Activated CD4-positive, alpha-beta T cell treated with anti-CD3 and anti-CD28 coated beads for 36 hours (primary cell): ENCODE measurements at regions of chr22 and their contacts with region 1.

Region 1: DNA sequence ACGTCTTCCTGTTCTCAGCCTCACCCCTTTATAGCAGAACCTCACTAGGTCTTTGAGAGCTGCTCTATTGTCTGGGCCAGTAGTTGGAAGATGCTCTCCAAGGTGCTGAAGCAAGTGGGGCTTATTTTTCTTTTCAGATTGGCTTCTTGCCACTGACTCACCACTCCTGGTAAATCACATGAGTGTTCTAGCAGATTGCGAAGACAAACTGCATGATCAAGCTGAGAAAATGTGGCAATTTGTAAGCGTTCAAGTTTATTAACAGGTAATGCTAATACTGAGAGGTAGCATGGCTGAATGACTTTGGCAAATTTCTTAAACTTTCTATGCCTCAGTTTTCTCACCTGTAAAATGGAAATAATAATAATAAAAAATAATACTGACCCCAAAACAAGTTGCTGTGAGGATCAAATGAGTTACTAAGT is 59.2 kb downstream of the CACNG2 start:
- DNase-seq: peak; percentile 47
- ATAC-seq: no peak
- H3K4me3 Mint-ChIP-seq: no peak overlapping the region
- H3K27ac Mint-ChIP-seq: no peak overlapping the region
- H3K4me1 Mint-ChIP-seq: peaks cover 3% of the 10 kb centered on the region
- H3K27me3 Mint-ChIP-seq: peaks cover 43% of the 10 kb centered on the region

Region 2: DNA sequence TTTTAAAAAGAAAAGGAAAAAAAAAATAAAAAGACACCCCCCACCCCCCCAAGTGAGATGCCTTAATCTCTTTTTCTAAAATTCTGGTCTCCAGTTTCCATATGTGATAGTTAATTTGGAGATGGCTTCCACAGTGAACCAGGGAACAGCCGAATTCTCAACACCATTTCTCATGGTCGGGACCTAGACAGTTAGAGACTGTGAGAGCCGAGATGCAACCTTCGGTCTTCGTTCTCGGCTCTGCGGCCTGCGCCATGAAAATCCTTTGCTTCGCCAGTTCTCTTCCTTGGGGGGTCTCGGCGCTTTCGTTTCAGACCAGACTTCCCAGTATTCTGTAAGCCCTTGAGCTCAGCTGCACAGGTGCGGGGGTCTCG is 58.5 kb after region 1 on chr22:
- CTCF ChIA-PET with region 1: no interaction called
- POLR2A ChIA-PET with region 1: no interaction called
- intact Hi-C with region 1: loop called (anchors 2 to 5 kb)
- DNase-seq: no peak
- ATAC-seq: no peak
- H3K4me3 Mint-ChIP-seq: no peak overlapping the region
- H3K27ac Mint-ChIP-seq: no peak overlapping the region
- H3K4me1 Mint-ChIP-seq: peaks cover 4% of the 10 kb centered on the region
- H3K27me3 Mint-ChIP-seq: peaks cover 64% of the 10 kb centered on the region